PC-9 (cell line): ENCODE measurements at regions of chr14 and their contacts with region 1.

Region 1: GRCh38 chr14:103628684-103629502 is at the start of gene KLC1:
- DNase-seq: peak; percentile 57 to 90
- H3K4me3 ChIP-seq: peak within 1 kb of the TSS; percentile 81
- H3K27ac ChIP-seq: peak within 1 kb of the TSS; percentile 92
- H3K4me1 ChIP-seq: peaks cover 50% of the 10 kb centered on the region
- H3K27me3 ChIP-seq: no peaks in the 10 kb centered on the region
- CTCF ChIP-seq: no peak
- total RNA-seq, gene KLC1: 254 and 331 TPM in 2 replicates

Region 2: GRCh38 chr14:103657471-103657870 is 28.6 kb after region 1 on chr14:
- CTCF ChIA-PET with region 1: no interaction called
- POLR2A ChIA-PET with region 1: interaction called, 15 read pairs
- intact Hi-C with region 1: no loop called
- DNase-seq: no peak
- H3K4me3 ChIP-seq: no peak overlapping the region
- H3K27ac ChIP-seq: no peak overlapping the region
- H3K4me1 ChIP-seq: peaks cover 11% of the 10 kb centered on the region
- H3K27me3 ChIP-seq: no peaks in the 10 kb centered on the region
- CTCF ChIP-seq: no peak

Region 3: DNA sequence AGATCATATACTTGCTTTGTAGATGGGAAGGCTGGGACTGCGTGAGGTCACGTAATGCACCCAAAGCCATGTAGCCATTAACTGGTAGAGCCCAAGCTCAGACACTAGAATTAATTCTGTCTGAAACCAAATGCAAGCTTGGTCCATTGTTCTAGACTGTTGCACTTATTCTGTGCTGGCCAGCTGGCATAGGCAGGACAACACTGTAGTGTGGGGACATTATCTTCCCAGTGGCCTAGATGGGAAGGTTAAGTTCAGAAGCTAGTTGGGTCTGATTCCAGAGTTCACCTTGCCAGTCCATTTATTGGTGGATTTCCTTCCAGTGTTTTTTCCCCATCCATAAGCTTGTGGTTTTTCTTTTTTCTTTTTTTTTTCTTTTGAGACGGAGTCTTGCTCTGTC is 39.2 kb after region 1 on chr14:
- CTCF ChIA-PET with region 1: no interaction called
- POLR2A ChIA-PET with region 1: no interaction called
- intact Hi-C with region 1: no loop called
- DNase-seq: no peak
- H3K4me3 ChIP-seq: no peak overlapping the region
- H3K27ac ChIP-seq: no peak overlapping the region
- H3K4me1 ChIP-seq: no peaks in the 10 kb centered on the region
- H3K27me3 ChIP-seq: no peaks in the 10 kb centered on the region
- CTCF ChIP-seq: no peak

Region 4: DNA sequence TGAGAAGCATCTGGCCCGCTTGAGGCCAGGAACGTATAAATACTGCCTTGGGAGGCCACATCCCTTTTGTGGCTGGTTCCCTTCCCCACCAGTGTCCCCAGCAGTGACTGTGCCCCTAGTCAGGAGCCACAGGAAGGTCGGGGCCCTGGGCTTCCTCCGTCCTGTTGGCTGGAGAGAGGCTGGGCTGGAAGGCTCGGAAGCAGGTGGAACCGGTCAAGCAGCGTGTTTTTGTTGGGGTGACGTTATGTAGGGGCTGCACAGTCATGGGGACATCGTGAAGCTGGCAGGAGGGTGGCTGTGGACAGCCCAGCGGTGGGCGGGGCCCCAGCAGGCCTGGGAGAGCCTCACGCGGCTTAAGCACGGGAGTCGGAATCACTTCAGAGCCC is 76.2 kb after region 1 on chr14:
- CTCF ChIA-PET with region 1: interaction called, 4 read pairs
- POLR2A ChIA-PET with region 1: no interaction called
- intact Hi-C with region 1: loop called (anchors 1 kb)
- DNase-seq: peak; percentile 99 to 100
- H3K4me3 ChIP-seq: no peak overlapping the region; the same call in 1 of the 2 replicates
- H3K27ac ChIP-seq: peak overlapping the region; percentile 44
- H3K4me1 ChIP-seq: peaks cover 19% of the 10 kb centered on the region
- H3K27me3 ChIP-seq: no peaks in the 10 kb centered on the region
- CTCF ChIP-seq: no peak